Activated CD4-positive, alpha-beta memory T cell treated with anti-CD3 and anti-CD28 coated beads for 36 hours (primary cell): ENCODE measurements at regions of chr22 and their contacts with region 1.

Region 1: GRCh38 chr22:39003165-39003638 is 10.9 kb upstream of the APOBEC3C start:
- DNase-seq: peak; percentile 89
- H3K4me3 Mint-ChIP-seq: no peak overlapping the region
- H3K27ac Mint-ChIP-seq: peak overlapping the region; percentile 6
- H3K4me1 Mint-ChIP-seq: peaks cover 8% of the 10 kb centered on the region
- H3K27me3 Mint-ChIP-seq: no peaks in the 10 kb centered on the region

Region 2: GRCh38 chr22:38927033-38927781 is 76.0 kb before region 1 on chr22:
- CTCF ChIA-PET with region 1: interaction called, 15 read pairs
- POLR2A ChIA-PET with region 1: no interaction called
- intact Hi-C with region 1: loop called (anchors 2 kb)
- DNase-seq: peak; percentile 78
- H3K4me3 Mint-ChIP-seq: peak overlapping the region; percentile 42
- H3K27ac Mint-ChIP-seq: no peak overlapping the region
- H3K4me1 Mint-ChIP-seq: peaks cover 3% of the 10 kb centered on the region
- H3K27me3 Mint-ChIP-seq: peaks cover 26% of the 10 kb centered on the region

Region 3: DNA sequence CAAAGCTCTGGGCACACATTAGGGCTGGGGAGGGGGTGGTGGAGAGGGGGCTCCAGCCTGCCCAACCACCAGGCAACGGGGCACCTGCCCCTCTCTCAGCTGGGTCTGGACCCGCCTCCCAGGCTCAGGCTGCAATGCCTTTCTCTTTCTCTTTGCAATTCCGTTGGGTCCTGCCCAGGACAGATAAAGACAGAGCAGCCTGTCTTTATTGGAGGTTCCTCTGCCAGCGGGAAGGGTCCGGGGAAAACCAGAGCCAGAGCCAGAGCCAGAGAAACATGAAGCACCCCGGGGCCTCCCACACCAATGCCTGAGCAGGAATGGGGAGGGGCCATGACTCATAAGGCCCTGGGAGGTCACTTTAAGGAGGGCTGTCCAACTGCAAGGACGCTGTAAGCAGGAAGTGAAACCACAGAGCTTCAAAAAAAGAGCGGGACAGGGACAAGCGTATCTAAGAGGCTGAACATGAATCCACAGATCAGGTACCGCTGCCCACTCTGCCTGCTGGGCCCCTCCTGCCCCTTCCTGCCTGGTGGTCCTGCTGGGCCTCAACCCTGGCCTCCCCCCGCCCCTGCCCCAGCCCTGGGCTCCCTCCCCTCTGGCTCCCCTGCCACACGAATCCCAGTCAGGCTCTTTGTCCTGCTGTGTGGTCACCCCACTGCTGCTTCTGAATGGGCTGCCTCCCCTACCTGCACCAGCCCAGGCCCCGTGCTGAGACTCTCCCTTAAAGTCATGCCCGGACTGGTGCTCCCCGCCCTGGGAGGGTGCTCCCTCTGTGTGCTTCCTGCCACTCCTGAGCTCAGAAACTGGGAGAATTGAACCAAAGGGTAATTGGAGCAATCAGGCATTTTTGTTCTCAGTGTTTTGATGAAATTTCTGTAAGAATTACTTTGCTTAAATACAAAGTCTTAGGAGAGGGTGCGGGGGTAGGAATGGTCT is 20.9 kb before region 1 on chr22 and contains the start of gene APOBEC3B:
- CTCF ChIA-PET with region 1: interaction called, 12 read pairs
- POLR2A ChIA-PET with region 1: interaction called, 3 read pairs
- intact Hi-C with region 1: loop called (anchors 1 kb)
- DNase-seq: peak; percentile 90
- H3K4me3 Mint-ChIP-seq: peak within 1 kb of the TSS; percentile 64
- H3K27ac Mint-ChIP-seq: peak within 1 kb of the TSS; percentile 83
- H3K4me1 Mint-ChIP-seq: peaks cover 55% of the 10 kb centered on the region
- H3K27me3 Mint-ChIP-seq: no peaks in the 10 kb centered on the region
- total RNA-seq, gene APOBEC3B: 43.9 to 44.3 TPM

Region 4: GRCh38 chr22:39021552-39022250 is 18.5 kb after region 1 on chr22:
- CTCF ChIA-PET with region 1: interaction called, 19 read pairs
- POLR2A ChIA-PET with region 1: no interaction called
- intact Hi-C with region 1: no loop called
- DNase-seq: no peak
- H3K4me3 Mint-ChIP-seq: peak overlapping the region; percentile 90
- H3K27ac Mint-ChIP-seq: peak overlapping the region; percentile 97
- H3K4me1 Mint-ChIP-seq: peaks cover 59% of the 10 kb centered on the region
- H3K27me3 Mint-ChIP-seq: no peaks in the 10 kb centered on the region

Region 5: GRCh38 chr22:39084666-39085065 is 81.5 kb after region 1 on chr22:
- CTCF ChIA-PET with region 1: no interaction called
- POLR2A ChIA-PET with region 1: no interaction called
- intact Hi-C with region 1: no loop called
- DNase-seq: no peak
- H3K4me3 Mint-ChIP-seq: no peak overlapping the region
- H3K27ac Mint-ChIP-seq: no peak overlapping the region
- H3K4me1 Mint-ChIP-seq: peaks cover 63% of the 10 kb centered on the region
- H3K27me3 Mint-ChIP-seq: no peaks in the 10 kb centered on the region

Region 6: GRCh38 chr22:39123751-39124601 is 120.8 kb after region 1 on chr22:
- CTCF ChIA-PET with region 1: interaction called, 15 read pairs
- POLR2A ChIA-PET with region 1: no interaction called
- intact Hi-C with region 1: loop called (anchors 1 kb)
- DNase-seq: no peak
- H3K4me3 Mint-ChIP-seq: no peak overlapping the region
- H3K27ac Mint-ChIP-seq: no peak overlapping the region
- H3K4me1 Mint-ChIP-seq: peaks cover 16% of the 10 kb centered on the region
- H3K27me3 Mint-ChIP-seq: no peaks in the 10 kb centered on the region